CD14-positive monocyte (primary cell): ENCODE measurements at regions of chr17 and their contacts with region 1.

Region 1: DNA sequence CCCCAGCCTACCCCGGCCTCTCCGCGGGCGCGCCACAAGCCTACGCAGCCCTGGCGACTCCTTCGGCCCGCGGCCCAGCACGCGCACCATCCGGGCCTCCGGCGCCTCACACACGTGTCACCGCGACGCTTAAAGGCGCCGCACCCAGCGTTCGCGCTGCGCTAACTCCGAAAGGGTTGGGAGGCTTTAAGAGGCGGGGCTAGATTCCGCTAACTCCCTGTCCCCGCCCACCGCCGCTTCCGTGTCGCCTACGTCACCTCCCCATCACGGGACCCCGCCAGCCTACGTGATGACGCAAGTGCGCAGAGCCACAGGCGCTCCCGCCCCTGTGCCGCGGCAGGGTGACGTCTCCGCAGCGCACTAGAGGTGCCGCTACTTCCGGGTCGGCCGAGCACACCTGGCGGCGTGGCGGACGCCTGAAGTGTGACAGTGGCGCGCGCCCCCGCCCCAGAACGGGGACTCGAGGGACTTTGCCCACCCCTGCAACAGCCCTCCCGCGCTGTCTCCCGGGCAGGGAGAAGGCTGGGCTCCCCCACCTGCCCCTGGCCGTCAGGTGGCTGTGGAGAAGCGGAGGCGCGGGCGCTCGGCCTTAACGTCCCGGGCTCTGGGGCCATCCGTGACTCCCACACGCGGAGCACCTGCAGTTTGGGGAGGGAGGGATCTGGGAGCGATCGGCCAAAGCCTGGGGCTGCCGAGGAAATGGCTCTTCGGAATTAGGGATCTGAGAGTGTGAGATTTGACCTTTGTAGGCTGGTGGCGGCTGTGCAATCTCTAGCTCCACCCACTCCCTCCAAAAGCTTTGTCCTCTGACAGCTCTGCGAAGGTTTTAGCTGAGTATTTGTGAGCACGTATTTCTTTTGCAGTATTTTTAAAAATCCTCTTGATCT is at the start of gene USP36:
- DNase-seq: peak; percentile 99 to 100 (median 99)
- H3K4me3 ChIP-seq: peak within 1 kb of the TSS; percentile 76 to 80 (median 80)
- H3K4me3 Mint-ChIP-seq: peak within 1 kb of the TSS; percentile 89 to 94
- H3K27ac ChIP-seq: peak within 1 kb of the TSS; percentile 96 to 99
- H3K27ac Mint-ChIP-seq: peak within 1 kb of the TSS; percentile 97 to 99 (median 99)
- H3K4me1 ChIP-seq: peaks cover 18 to 33% of the 10 kb centered on the region in 2 donors
- H3K4me1 Mint-ChIP-seq: peaks cover 35% of the 10 kb centered on the region
- H3K27me3 ChIP-seq: no peaks in the 10 kb centered on the region
- H3K27me3 Mint-ChIP-seq: peaks cover 0 to 6% (median 2%) of the 10 kb centered on the region in 3 donors
- CTCF ChIP-seq: no peak
- polyA plus RNA-seq, gene USP36: 4.4 to 30.0 (median 6.1) TPM

Region 2: DNA sequence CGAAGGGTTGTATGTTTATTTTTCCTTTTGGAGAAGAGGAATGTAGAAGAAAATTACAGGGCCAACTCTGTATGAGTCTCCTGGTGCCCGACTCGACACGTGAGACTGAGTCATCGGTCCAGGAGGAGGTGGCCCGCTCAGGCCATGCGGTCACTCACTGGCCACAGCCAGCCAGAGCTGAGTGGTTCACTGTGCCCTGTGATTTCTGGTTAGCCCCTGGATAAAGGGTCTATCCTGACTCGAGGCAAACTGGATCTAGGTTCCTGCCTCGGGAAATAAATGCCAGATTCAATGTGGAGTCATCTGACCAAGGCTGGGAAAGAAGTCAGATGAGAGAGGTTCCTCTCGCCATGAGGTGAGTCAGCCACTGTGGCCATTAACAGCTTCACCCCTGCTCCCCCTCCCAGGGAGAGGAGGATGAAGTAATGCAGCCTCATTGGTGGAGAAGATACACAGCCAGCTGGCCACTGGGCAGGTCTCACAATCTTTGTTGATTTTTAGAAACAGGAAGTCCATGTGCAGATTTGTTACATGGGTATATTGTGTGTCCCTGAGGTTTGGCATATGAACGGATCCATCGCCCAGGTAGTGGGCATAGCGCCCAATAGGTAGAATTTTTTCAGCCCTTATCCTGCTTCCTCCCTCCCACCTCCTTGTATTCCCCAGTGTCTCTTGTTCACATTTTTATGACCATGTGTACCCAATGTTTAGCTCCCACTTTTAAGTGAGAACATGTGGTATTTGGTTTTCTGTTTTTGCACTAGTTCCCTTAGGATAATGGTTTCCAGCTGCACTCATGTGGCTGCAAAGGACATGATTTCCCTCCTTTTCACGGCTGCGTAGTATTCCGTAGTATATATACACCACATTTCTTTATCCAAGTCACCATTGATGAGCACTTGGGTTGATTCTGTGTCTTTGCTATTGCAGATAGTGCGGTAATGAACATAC is 21.4 kb after region 1 on chr17:
- intact Hi-C with region 1: no loop called
- DNase-seq: peak; percentile 94 to 98 (median 95)
- H3K4me3 ChIP-seq: no peak overlapping the region
- H3K4me3 Mint-ChIP-seq: peak overlapping the region; percentile 21 to 35
- H3K27ac ChIP-seq: peak overlapping the region; percentile 85 to 93
- H3K27ac Mint-ChIP-seq: peak overlapping the region; percentile 97 to 99 (median 98)
- H3K4me1 ChIP-seq: peaks cover 36 to 63% of the 10 kb centered on the region in 2 donors
- H3K4me1 Mint-ChIP-seq: peaks cover 42% of the 10 kb centered on the region
- H3K27me3 ChIP-seq: no peaks in the 10 kb centered on the region
- H3K27me3 Mint-ChIP-seq: no peaks in the 10 kb centered on the region
- CTCF ChIP-seq: no peak

Region 3: DNA sequence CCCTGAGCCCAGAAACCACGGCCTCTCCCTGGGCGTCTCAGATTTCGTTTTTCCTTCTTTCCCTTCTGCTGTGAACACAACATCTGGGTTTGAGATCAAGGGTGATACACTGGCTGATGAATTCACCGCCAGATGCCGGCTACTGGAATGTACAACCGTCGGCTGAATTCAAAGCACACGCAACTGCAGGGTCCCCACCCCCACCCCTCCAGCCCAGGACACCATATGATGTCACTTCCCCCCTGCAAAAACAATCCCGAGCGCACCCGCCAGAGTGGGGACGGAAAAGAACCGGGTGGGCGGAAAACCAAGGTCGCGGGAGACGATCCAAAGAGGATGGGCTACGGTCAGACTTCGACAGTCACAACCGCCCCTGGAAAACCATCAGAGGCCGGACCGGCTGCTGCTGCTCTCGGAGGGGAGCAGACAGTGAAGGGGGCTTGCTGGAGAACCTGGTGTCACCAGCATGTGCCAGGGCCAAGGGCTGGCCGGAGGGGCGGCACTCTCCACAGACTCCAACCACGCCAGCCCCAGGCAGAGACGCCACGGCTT is 38.7 kb after region 1 on chr17:
- intact Hi-C with region 1: no loop called
- DNase-seq: peak; percentile 36 to 77 (median 66)
- H3K4me3 ChIP-seq: peak overlapping the region in 1 of 3 experiments; percentile 42
- H3K4me3 Mint-ChIP-seq: peak overlapping the region; percentile 13 to 62
- H3K27ac ChIP-seq: peak overlapping the region; percentile 51 to 73
- H3K27ac Mint-ChIP-seq: peak overlapping the region; percentile 73 to 97 (median 88)
- H3K4me1 ChIP-seq: peaks cover 70 to 88% of the 10 kb centered on the region in 2 donors
- H3K4me1 Mint-ChIP-seq: peaks cover 69% of the 10 kb centered on the region
- H3K27me3 ChIP-seq: no peaks in the 10 kb centered on the region
- H3K27me3 Mint-ChIP-seq: peaks cover 0 to 2% (median 2%) of the 10 kb centered on the region in 3 donors
- CTCF ChIP-seq: no peak

Region 4: GRCh38 chr17:78970834-78971773 is 130.1 kb after region 1 on chr17:
- intact Hi-C with region 1: loop called (anchors 5 to 10 kb)
- DNase-seq: peak; percentile 70 to 78 (median 78)
- H3K4me3 ChIP-seq: no peak overlapping the region
- H3K4me3 Mint-ChIP-seq: peak overlapping the region; percentile 51 to 57
- H3K27ac ChIP-seq: no peak overlapping the region
- H3K27ac Mint-ChIP-seq: peak overlapping the region in 6 of 7 donors; percentile 36 to 82 (median 56)
- H3K4me1 ChIP-seq: peaks cover 4 to 8% of the 10 kb centered on the region in 2 donors
- H3K4me1 Mint-ChIP-seq: peaks cover 15% of the 10 kb centered on the region
- H3K27me3 ChIP-seq: no peaks in the 10 kb centered on the region
- H3K27me3 Mint-ChIP-seq: peaks cover 1 to 2% (median 2%) of the 10 kb centered on the region in 3 donors
- CTCF ChIP-seq: peak; percentile 91

Region 5: DNA sequence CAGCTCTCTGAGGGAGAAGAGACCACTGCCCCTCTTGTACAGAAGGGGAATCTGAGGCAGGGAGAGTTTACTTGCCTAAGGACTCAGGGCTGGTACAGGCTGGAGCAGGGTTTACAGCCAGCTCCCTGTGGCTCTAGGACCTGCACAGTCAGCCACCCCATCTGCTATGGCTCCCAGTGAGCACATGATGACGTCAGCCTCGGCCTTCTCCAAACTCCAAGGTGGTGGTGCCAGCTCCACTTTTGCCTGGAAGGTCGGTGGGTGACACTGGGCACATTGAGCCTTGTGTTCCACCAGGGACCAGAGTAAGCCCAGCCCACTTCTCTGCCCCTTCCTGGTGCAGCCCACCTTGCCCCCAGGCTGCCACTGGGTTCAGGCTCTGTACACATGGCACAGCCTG is 435.9 kb after region 1 on chr17:
- intact Hi-C with region 1: no loop called
- DNase-seq: no peak
- H3K4me3 ChIP-seq: no peak overlapping the region
- H3K4me3 Mint-ChIP-seq: no peak overlapping the region
- H3K27ac ChIP-seq: no peak overlapping the region
- H3K27ac Mint-ChIP-seq: no peak overlapping the region
- H3K4me1 ChIP-seq: no peaks in the 10 kb centered on the region
- H3K4me1 Mint-ChIP-seq: no peaks in the 10 kb centered on the region
- H3K27me3 ChIP-seq: no peaks in the 10 kb centered on the region
- H3K27me3 Mint-ChIP-seq: peaks cover 0 to 13% (median 2%) of the 10 kb centered on the region in 3 donors
- CTCF ChIP-seq: no peak